ENCODE measurements at regions of chr5 and their contacts with region 1.

Region 1: DNA sequence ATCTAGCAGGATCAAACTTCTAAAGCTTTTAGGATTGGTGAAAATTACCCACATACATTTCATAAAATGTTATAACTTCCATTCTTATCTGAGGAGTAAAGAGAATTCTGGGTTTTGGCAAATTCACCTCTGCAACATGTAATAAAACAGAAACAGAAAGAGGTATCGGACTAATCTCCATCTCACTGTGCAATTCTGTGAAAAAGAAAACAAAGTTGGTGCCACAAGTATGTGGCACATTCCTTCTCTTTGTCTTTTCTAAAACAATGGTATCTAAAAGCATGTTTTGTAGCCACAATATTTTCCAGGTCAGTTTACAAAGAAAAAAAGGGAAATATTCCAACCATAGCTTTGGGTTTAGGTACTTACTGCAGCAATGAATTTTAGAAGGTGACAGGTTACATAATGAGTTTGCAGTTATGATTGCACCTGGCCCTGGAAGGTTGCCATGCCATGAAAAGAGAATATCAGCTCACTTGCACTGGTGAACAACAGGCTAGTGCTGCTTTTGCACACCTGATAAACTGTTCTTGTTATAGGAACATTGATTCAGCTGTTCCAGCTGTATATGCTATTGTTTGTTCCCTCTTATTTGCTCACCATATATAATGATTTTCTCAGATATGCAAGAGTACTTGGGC is 491.3 kb upstream of the MEF2C start:
- DNase-seq: no peak
- ATAC-seq: no peak
- H3K4me3 ChIP-seq: no peak overlapping the region
- H3K27ac ChIP-seq: no peak overlapping the region
- H3K4me1 ChIP-seq: peaks cover 0 to 5% (median 0%) of the 10 kb centered on the region in 9 donors
- H3K27me3 ChIP-seq: no peaks in the 10 kb centered on the region
- CTCF ChIP-seq: no peak

Region 2: DNA sequence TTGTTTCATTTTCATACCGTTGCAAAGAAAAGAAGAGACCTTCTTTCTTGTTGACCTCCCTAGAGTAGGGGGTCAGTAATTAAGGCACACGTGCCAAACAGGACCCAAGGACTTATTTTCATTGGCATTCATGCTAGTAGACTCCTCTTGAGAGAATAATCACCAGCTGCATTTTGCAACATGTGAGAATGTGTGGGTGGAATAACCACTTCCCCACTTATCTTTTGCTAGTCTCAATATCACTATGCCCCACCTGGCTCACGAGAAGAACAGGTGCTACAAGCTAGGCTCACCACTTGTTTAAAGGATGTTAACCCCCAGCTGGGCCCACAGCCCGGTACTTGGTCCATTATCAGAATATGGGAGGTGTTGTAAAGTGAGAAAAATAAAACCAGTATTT is 30.6 kb before region 1 on chr5:
- intact Hi-C with region 1: no loop called
- DNase-seq: no peak
- ATAC-seq: no peak
- H3K4me3 ChIP-seq: no peak overlapping the region
- H3K27ac ChIP-seq: no peak overlapping the region
- H3K4me1 ChIP-seq: peaks cover 0 to 6% (median 0%) of the 10 kb centered on the region in 9 donors
- H3K27me3 ChIP-seq: no peaks in the 10 kb centered on the region
- CTCF ChIP-seq: no peak

Region 3: GRCh38 chr5:89417990-89418389 is 43.7 kb after region 1 on chr5:
- intact Hi-C with region 1: loop called in 1 of 10 experiments (anchors 5 kb)
- DNase-seq: no peak
- ATAC-seq: no peak
- H3K4me3 ChIP-seq: no peak overlapping the region
- H3K27ac ChIP-seq: peak overlapping the region in 1 of 10 donors; percentile 31
- H3K4me1 ChIP-seq: peaks cover 0 to 12% (median 0%) of the 10 kb centered on the region in 9 donors
- H3K27me3 ChIP-seq: no peaks in the 10 kb centered on the region
- CTCF ChIP-seq: no peak